Ascending aorta (tissue), 2 donors: ENCODE measurements at regions of chr5 and their contacts with region 1.

Region 1: DNA sequence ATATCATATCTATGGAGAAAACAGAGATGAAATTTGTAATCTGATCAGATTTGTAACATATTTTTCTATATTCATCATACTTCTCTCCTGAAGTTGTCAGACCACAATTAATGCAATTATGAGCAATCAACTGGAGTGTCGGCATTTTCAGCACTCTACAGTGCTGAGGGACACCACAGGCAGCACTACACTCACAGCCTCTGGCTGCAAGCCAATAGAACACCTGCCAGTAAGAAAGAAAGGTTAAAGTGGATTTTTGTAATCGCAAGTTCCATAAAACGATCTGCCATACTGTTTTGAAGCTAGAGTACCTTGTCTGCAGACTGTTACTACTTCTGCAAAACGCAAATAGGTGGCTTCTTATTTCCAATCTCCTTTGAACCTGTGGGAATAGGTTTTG is 147.6 kb downstream of the ADAMTS6 start:
- DNase-seq: no peak
- H3K4me3 ChIP-seq: no peak overlapping the region
- H3K27ac ChIP-seq: no peak overlapping the region
- H3K4me1 ChIP-seq: no peaks in the 10 kb centered on the region
- H3K27me3 ChIP-seq: no peaks in the 10 kb centered on the region
- CTCF ChIP-seq: no peak

Region 2: DNA sequence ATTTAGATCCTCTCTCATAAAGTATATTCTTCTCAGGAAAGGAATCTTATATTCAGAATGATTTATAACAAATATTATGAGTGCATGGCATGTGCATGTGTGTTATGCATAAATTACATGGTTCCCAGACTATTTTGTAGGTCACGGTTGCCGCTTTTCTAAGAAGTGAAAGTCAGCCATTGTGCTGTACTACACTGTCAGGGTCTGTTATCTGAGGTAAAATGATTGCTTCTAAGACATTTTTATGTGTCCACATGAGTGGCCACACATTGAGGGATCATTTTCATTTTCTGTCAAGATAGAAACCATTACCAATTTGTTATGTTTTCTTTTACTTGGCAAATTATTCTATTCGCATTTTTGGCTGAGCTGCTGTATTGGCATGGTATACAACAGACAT is 354.5 kb before region 1 on chr5:
- intact Hi-C with region 1: no loop called
- DNase-seq: no peak
- H3K4me3 ChIP-seq: no peak overlapping the region
- H3K27ac ChIP-seq: no peak overlapping the region
- H3K4me1 ChIP-seq: no peaks in the 10 kb centered on the region
- H3K27me3 ChIP-seq: no peaks in the 10 kb centered on the region
- CTCF ChIP-seq: no peak

Region 3: GRCh38 chr5:65418661-65419060 is 84.6 kb after region 1 on chr5:
- intact Hi-C with region 1: loop called (anchors 10 kb)
- DNase-seq: no peak
- H3K4me3 ChIP-seq: no peak overlapping the region
- H3K27ac ChIP-seq: no peak overlapping the region
- H3K4me1 ChIP-seq: no peaks in the 10 kb centered on the region
- H3K27me3 ChIP-seq: no peaks in the 10 kb centered on the region
- CTCF ChIP-seq: no peak

Region 4: DNA sequence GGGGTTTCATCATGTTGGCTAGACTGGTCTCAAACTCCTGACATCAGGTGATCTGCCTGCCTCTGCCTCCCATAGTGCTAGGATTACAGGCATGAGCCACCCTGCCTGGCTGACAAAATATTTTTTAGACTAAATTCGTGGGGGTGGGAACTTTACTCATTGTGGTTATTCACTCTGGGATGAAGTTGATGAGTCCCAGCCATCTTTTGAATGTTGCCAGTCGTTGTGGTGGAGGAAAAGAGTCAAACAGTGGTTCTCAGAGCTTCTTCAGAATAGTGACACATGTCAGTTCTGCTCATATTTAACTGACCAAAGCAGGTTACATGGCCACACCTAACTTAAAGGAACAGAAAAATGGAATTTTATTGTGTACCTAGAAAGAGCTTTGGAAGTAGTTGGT is 817.0 kb after region 1 on chr5:
- intact Hi-C with region 1: no loop called
- DNase-seq: no peak
- H3K4me3 ChIP-seq: no peak overlapping the region
- H3K27ac ChIP-seq: no peak overlapping the region
- H3K4me1 ChIP-seq: peaks cover 0 to 6% of the 10 kb centered on the region in 2 donors
- H3K27me3 ChIP-seq: no peaks in the 10 kb centered on the region
- CTCF ChIP-seq: no peak